MCF 10A (cell line): ENCODE measurements at regions of chr22 and their contacts with region 1.

Region 1: GRCh38 chr22:42868751-42869251 is 11.7 kb upstream of the ARFGAP3 start:
- DNase-seq: no peak
- H3K4me3 Mint-ChIP-seq: no peak overlapping the region
- H3K27ac Mint-ChIP-seq: no peak overlapping the region
- H3K4me1 Mint-ChIP-seq: no peaks in the 10 kb centered on the region
- H3K27me3 Mint-ChIP-seq: no peaks in the 10 kb centered on the region
- CTCF ChIP-seq: no peak

Region 2: GRCh38 chr22:42528258-42528948 is 340.4 kb before region 1 on chr22:
- CTCF ChIA-PET with region 1: no interaction called
- POLR2A ChIA-PET with region 1: no interaction called
- intact Hi-C with region 1: no loop called
- DNase-seq: no peak
- H3K4me3 Mint-ChIP-seq: no peak overlapping the region
- H3K27ac Mint-ChIP-seq: no peak overlapping the region
- H3K4me1 Mint-ChIP-seq: peaks cover 4% of the 10 kb centered on the region
- H3K27me3 Mint-ChIP-seq: peaks cover 15% of the 10 kb centered on the region
- CTCF ChIP-seq: no peak

Region 3: DNA sequence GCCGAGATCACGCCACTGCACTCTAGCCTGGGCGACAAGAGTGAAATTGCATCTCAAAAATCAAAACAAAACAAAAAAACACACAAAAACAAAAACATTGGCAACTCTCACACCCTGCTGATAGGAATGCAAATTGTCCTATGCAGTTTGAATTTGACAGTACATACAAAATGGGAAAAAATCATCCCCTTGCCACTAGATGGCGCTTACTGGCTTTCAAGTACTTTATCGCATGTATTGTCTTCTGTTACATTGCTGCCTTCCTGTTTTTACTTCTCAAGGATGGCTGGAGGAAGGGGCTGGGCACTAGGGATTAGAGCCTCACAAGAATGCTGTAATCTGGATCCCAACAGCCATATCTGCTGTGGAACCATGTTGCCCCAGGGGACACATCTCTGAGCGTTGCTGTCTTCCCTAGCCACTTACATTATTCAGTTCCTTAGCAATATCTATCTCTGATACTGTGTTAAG is 88.7 kb before region 1 on chr22:
- CTCF ChIA-PET with region 1: interaction called, 3 read pairs
- POLR2A ChIA-PET with region 1: interaction called, 4 read pairs
- intact Hi-C with region 1: loop called (anchors 5 kb)
- DNase-seq: peak; percentile 89
- H3K4me3 Mint-ChIP-seq: no peak overlapping the region
- H3K27ac Mint-ChIP-seq: no peak overlapping the region
- H3K4me1 Mint-ChIP-seq: no peaks in the 10 kb centered on the region
- H3K27me3 Mint-ChIP-seq: no peaks in the 10 kb centered on the region
- CTCF ChIP-seq: peak; percentile 87